Activated T-helper 2 cell treated with anti-CD3 and anti-CD28 coated beads, Interferon-gamma antibody, Interleukin-2, Interleukin-4, amounts not matched to agents 10 μg/mL and 5 μg/mL and 100 μg/mL, durations not matched to agents 14 hours and 24 hours and 36 hours (primary cell): ENCODE measurements at regions of chr3 and their contacts with region 1.

Region 1: GRCh38 chr3:100708967-100709841 is at the start of gene TFG:
- DNase-seq: peak; percentile 98
- H3K4me3 Mint-ChIP-seq: peak within 1 kb of the TSS; percentile 83
- H3K27ac Mint-ChIP-seq: peak within 1 kb of the TSS; percentile 85
- H3K4me1 Mint-ChIP-seq: peaks cover 41% of the 10 kb centered on the region
- H3K27me3 Mint-ChIP-seq: no peaks in the 10 kb centered on the region
- total RNA-seq, gene TFG: 79.3 and 81.2 TPM in 2 replicates

Region 2: GRCh38 chr3:99817437-99818240 is 891.6 kb before region 1 on chr3 and contains the start of gene CMSS1:
- intact Hi-C with region 1: loop called (anchors 5 kb)
- DNase-seq: peak; percentile 92
- H3K4me3 Mint-ChIP-seq: peak within 1 kb of the TSS; percentile 95
- H3K27ac Mint-ChIP-seq: peak within 1 kb of the TSS; percentile 96
- H3K4me1 Mint-ChIP-seq: peaks cover 42% of the 10 kb centered on the region
- H3K27me3 Mint-ChIP-seq: no peaks in the 10 kb centered on the region
- total RNA-seq, gene CMSS1: 138 and 143 TPM in 2 replicates

Region 3: DNA sequence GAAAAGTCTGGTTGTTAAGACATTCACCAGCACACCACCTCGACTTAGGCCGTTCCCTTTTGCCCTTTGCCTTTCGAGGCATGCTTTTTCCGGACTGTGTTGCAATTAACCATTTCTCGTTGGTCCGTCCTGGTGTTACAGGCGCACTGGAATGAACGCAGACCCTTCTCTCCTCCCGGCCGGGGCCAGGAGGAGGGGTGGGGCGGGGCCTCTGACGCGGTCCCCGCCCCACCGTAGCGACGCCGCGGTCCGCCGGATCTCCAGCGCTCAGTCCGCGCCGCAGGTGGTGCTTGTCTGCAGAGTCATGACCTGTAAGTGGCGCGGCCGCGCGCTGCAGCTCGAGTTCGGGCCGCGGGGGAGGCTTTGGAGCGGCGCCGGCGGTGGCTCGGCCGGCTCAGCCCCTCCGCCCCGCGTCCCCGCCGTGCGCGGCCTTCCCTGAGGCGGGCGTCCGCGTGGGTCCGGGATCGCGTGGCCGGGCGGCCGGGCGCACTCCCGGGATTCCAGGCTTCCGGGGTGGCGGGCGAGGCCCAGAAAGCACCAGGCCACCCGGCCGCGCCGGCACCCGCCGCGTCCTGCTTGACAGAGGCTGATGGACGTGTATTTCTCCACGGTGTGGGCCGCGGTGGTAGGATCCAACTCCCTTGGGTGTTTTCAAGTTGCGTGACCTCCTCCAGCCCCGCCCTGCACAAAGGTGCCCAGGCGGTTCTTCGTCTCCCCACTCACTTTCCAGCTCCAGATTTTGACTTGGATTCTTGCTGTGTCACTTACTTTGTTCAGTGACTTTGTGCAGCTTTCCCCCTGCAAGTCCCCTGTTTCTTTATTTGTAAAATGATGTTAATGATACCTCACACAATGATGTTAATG is 374.5 kb before region 1 on chr3 and contains the start of gene NIT2:
- intact Hi-C with region 1: loop called (anchors 10 kb)
- DNase-seq: peak; percentile 74
- H3K4me3 Mint-ChIP-seq: peak within 1 kb of the TSS; percentile 99
- H3K27ac Mint-ChIP-seq: peak within 1 kb of the TSS; percentile 99
- H3K4me1 Mint-ChIP-seq: peaks cover 18% of the 10 kb centered on the region
- H3K27me3 Mint-ChIP-seq: no peaks in the 10 kb centered on the region
- total RNA-seq, gene NIT2: 73.0 and 73.7 TPM in 2 replicates

Region 4: GRCh38 chr3:100650651-100651611 is 58.3 kb before region 1 on chr3:
- intact Hi-C with region 1: loop called (anchors 1 kb)
- DNase-seq: no peak
- H3K4me3 Mint-ChIP-seq: peak overlapping the region; percentile 5
- H3K27ac Mint-ChIP-seq: peak overlapping the region; percentile 38
- H3K4me1 Mint-ChIP-seq: peaks cover 14% of the 10 kb centered on the region
- H3K27me3 Mint-ChIP-seq: peaks cover 2% of the 10 kb centered on the region

Region 5: DNA sequence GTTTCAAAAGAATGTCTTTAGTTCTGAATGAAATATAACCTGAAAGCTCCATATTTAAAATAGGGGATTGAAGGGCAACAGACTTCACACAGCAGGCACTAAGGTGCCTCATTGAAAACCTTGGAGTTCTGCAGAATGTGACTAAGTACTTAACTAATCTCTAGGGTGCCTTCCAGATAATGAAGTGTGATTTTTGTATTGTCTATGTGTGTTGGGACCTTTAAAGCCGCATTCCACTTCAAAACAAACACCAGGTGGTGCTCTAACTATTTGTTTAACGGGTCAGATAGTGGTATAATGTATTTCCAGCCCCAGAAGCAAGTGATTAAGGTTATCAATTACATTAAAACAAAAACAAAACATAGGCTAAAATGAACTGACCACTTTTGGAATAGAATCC is 28.1 kb after region 1 on chr3:
- intact Hi-C with region 1: loop called (anchors 1 kb)
- DNase-seq: no peak
- H3K4me3 Mint-ChIP-seq: no peak overlapping the region
- H3K27ac Mint-ChIP-seq: peak overlapping the region; percentile 33
- H3K4me1 Mint-ChIP-seq: peaks cover 41% of the 10 kb centered on the region
- H3K27me3 Mint-ChIP-seq: no peaks in the 10 kb centered on the region